HepG2 (cell line): ENCODE measurements at regions of chr2 and their contacts with region 1.

Region 1: DNA sequence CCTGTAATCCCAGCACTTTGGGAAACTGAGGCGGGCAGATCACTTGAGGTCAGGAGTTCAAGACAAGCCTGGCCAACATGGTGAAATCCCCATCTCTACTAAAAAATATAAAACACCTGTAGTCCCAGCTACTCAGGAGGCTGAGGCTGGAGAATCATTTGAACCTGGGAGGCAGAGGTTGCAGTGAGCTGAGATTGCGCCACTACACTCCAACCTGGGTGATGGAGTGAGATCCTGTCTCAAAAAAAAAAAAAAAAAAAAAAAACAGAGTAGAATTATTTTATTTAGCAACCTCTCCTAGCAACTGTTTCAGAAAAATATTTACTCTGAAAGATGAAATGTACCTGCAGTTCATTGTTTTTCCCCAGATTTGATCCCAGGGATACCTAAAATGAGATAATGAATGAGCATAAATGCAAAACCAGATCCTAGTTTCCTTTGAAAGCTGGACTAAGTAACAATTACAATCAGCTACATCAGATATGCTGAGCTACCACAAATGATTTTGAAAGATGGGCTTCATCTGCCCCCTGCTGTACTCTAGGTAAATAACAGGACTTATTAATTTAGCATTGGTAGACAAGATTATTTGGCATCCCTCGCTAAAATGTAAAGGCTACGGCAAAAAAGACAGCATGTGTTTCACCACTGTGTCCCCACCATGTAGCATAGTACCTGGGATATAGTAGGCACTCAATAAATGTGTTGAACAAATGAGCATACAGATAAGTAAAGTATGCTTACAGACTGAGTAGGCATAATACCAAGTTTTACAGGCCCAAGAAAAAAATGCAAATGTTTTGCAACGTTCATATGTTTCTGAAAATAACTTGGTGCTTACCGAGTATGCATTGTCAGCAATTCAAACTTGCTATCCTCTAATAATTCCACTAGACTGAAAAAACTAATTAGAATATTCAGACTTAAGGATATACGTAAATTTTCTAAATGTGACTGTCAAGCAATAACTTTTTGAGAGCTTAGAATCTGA is 102.5 kb downstream of the ATL2 start:
- DNase-seq: peak; percentile 76
- ATAC-seq: peak; percentile 82
- H3K4me3 ChIP-seq: no peak overlapping the region
- H3K27ac ChIP-seq: no peak overlapping the region
- H3K4me1 ChIP-seq: peaks cover 21% of the 10 kb centered on the region
- H3K27me3 ChIP-seq: peaks cover 0 to 4% of the 10 kb centered on the region in 2 experiments; a peak in 3 of 5 replicates
- CTCF ChIP-seq: peak; percentile 81
- EP300 ChIP-seq: no peak
- POLR2A ChIP-seq: no peak
- RAD21 ChIP-seq: peak; percentile 74

Region 2: DNA sequence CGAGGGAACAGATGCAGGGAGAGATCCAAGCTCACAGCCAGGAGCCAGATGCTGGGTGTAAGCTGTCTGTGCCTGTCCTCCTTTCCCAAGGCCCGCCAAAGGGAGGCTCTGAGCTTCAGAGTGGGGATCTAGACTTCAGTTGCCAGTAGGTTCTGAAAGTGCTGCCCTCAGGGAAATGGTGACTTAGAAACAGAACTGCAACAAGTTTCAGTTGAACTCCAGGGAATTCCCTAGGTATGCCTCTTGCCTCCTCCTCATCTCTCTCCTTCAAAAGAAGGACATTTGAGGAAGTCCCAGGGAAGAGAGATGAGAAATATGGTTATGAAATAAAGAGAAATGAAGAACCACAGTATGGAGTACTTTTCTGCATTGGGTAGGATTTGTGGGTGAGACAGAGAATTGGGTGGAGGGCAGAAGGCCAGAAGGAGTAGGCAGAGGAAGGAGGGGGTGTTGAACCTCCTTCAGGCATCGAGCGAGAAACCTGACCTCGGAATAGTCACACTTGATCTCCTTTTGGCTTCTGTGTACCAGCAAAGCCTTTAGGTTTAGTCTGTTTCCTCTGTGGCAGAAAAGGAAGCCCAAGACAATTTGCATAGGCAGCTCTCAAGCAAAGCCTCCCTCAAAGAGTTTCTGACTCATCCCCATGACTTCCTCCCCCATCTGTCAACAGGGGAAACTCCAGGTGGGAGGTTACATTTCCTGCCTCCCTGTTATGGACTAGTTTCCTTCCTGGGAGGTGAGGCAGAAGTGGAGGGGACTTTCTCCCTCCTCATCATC is 884.4 kb before region 1 on chr2:
- CTCF ChIA-PET with region 1: interaction called, 15 read pairs
- POLR2A ChIA-PET with region 1: no interaction called
- in situ Hi-C with region 1: no loop called
- intact Hi-C with region 1: no loop called
- DNase-seq: peak; percentile 56
- ATAC-seq: peak; percentile 80
- H3K4me3 ChIP-seq: no peak overlapping the region
- H3K27ac ChIP-seq: no peak overlapping the region
- H3K4me1 ChIP-seq: peaks cover 12% of the 10 kb centered on the region; the same call in 1 of the 2 replicates
- H3K27me3 ChIP-seq: peaks cover 0 to 2% of the 10 kb centered on the region in 2 experiments; a peak in 2 of 5 replicates
- CTCF ChIP-seq: no peak
- EP300 ChIP-seq: peak in 1 of 2 experiments; percentile 14; a peak in 1 of 4 replicates
- POLR2A ChIP-seq: no peak
- RAD21 ChIP-seq: no peak

Region 3: DNA sequence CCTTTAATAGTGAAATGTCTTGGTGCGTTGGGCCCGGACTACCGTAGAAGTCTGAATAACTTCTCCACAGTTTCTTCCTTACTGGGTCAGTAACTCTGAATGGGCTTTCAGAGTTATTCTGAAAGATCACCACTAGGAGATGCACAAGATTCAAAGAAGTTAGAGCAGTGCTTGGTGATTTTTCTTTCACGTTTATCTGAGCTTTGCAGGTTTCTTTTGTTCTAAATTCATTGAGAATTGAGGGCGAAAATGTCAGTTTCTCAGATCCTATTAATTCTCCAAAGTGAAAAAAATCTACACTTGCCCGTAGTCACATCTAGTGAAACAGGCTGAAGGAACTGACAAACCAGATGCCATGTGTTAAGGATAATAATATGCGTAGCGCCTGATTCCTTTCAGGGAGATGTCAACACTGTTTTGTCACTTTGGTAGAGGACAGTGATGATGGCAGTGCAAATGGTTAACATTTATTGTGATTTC is 860.1 kb before region 1 on chr2:
- CTCF ChIA-PET with region 1: interaction called, 3 read pairs
- POLR2A ChIA-PET with region 1: no interaction called
- in situ Hi-C with region 1: no loop called
- intact Hi-C with region 1: loop called (anchors 2 kb)
- DNase-seq: peak; percentile 39
- ATAC-seq: peak; percentile 87
- H3K4me3 ChIP-seq: no peak overlapping the region
- H3K27ac ChIP-seq: no peak overlapping the region
- H3K4me1 ChIP-seq: no peaks in the 10 kb centered on the region
- H3K27me3 ChIP-seq: peaks cover 0 to 10% of the 10 kb centered on the region in 2 experiments; a peak in 3 of 5 replicates
- CTCF ChIP-seq: peak; percentile 72
- EP300 ChIP-seq: no peak
- POLR2A ChIP-seq: no peak
- RAD21 ChIP-seq: peak; percentile 72

Region 4: DNA sequence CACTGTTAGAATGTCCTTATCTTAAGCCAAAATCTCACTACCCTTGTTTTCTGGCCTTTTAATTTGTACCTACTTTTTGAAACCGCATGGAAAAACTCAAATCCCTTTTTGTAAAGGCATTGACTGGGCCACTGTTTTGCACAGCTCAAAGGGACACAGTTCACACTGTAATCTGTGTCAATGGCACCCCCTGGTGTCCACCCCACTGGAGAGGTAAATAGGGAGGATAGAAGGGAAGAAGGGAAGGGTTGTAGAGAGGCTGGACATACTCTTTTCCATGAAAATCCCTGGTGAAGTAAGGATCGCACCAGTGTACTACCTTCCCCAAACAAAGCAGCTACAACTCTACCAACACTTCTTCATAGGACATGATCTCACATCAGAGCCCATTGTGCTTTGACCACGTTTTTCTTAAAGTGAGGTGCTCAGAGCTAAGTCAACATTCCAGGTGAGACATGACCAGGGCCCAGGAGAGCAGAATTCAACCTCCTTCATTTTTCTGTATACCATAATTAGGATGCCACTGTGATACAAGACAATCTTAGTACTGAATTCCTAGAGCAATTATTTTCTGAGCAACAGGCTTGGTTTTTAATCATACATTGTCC is 441.9 kb before region 1 on chr2:
- CTCF ChIA-PET with region 1: no interaction called
- POLR2A ChIA-PET with region 1: no interaction called
- in situ Hi-C with region 1: no loop called
- intact Hi-C with region 1: loop called (anchors 1 kb)
- DNase-seq: peak; percentile 73
- ATAC-seq: peak; percentile 99
- H3K4me3 ChIP-seq: no peak overlapping the region
- H3K27ac ChIP-seq: no peak overlapping the region
- H3K4me1 ChIP-seq: peaks cover 7% of the 10 kb centered on the region
- H3K27me3 ChIP-seq: peaks cover 0 to 13% of the 10 kb centered on the region in 2 experiments; a peak in 2 of 5 replicates
- CTCF ChIP-seq: peak; percentile 93
- EP300 ChIP-seq: no peak
- POLR2A ChIP-seq: no peak
- RAD21 ChIP-seq: peak; percentile 78

Region 5: DNA sequence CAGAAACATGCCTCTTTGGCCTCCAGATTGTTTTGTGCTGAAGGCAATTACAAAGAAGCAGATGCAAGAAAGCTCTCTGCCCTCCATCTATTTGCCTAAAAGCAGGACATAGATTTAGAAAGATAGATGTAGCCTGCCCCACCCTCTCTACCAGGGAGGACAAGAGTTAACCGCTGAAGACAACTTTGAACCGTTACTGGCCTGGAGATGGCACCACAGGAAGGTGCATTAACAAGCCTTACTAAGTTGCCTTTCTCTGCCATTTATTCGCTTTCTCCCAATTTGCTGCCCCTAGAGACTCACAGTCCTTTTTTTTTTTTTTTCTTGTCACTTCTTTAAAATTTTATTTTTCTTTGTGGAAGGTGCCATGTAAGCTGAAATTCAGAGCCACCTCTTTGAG is 378.3 kb before region 1 on chr2:
- CTCF ChIA-PET with region 1: interaction called, 4 read pairs
- POLR2A ChIA-PET with region 1: no interaction called
- in situ Hi-C with region 1: loop called (anchors 5 kb)
- intact Hi-C with region 1: loop called (anchors 1 kb)
- DNase-seq: peak; percentile 56
- ATAC-seq: peak; percentile 89
- H3K4me3 ChIP-seq: no peak overlapping the region
- H3K27ac ChIP-seq: no peak overlapping the region
- H3K4me1 ChIP-seq: peaks cover 9% of the 10 kb centered on the region; the same call in 1 of the 2 replicates
- H3K27me3 ChIP-seq: no peaks in the 10 kb centered on the region; a peak in 2 of 5 replicates
- CTCF ChIP-seq: peak; percentile 80
- EP300 ChIP-seq: no peak
- POLR2A ChIP-seq: no peak
- RAD21 ChIP-seq: peak; percentile 62; the same call in 1 of the 2 replicates

Region 6: GRCh38 chr2:37982147-37982582 is 292.4 kb before region 1 on chr2:
- CTCF ChIA-PET with region 1: interaction called, 19 read pairs
- POLR2A ChIA-PET with region 1: no interaction called
- in situ Hi-C with region 1: no loop called
- intact Hi-C with region 1: loop called (anchors 1 kb)
- DNase-seq: peak; percentile 60
- ATAC-seq: peak; percentile 67
- H3K4me3 ChIP-seq: no peak overlapping the region
- H3K27ac ChIP-seq: no peak overlapping the region
- H3K4me1 ChIP-seq: no peaks in the 10 kb centered on the region
- H3K27me3 ChIP-seq: no peaks in the 10 kb centered on the region
- CTCF ChIP-seq: peak; percentile 83
- EP300 ChIP-seq: no peak
- POLR2A ChIP-seq: no peak
- RAD21 ChIP-seq: peak; percentile 50; the same call in 1 of the 2 replicates

Region 7: GRCh38 chr2:38115216-38116032 is 159.2 kb before region 1 on chr2:
- CTCF ChIA-PET with region 1: interaction called, 5 read pairs
- POLR2A ChIA-PET with region 1: no interaction called
- in situ Hi-C with region 1: no loop called
- intact Hi-C with region 1: loop called (anchors 1 kb)
- DNase-seq: peak; percentile 75
- ATAC-seq: peak; percentile 97
- H3K4me3 ChIP-seq: no peak overlapping the region
- H3K27ac ChIP-seq: no peak overlapping the region
- H3K4me1 ChIP-seq: no peaks in the 10 kb centered on the region
- H3K27me3 ChIP-seq: peaks cover 0 to 9% of the 10 kb centered on the region in 2 experiments; a peak in 2 of 5 replicates
- CTCF ChIP-seq: peak; percentile 93
- EP300 ChIP-seq: no peak
- POLR2A ChIP-seq: no peak
- RAD21 ChIP-seq: peak; percentile 79

Region 8: DNA sequence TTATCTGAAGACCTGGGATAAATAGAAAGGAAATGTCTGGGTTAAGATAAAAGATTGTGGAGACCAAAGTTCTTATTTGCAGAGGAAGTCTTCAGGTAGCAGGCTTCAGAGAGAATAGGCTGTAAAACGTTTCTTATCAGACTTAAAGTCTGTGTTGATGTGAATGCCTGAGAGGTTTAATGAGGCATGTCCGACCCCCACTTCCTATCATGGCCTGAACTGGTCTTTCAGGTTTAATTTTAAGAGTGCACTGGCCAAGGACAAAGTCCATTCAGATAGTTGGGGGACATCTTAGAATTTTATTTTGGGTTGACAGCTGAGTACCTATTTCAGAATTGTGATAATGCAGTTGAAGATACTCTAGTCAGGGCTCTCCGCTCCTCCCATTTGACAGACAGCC is 10.4 kb after region 1 on chr2:
- CTCF ChIA-PET with region 1: no interaction called
- POLR2A ChIA-PET with region 1: no interaction called
- in situ Hi-C with region 1: no loop called
- intact Hi-C with region 1: no loop called
- DNase-seq: no peak
- ATAC-seq: no peak
- H3K4me3 ChIP-seq: no peak overlapping the region
- H3K27ac ChIP-seq: no peak overlapping the region
- H3K4me1 ChIP-seq: no peaks in the 10 kb centered on the region
- H3K27me3 ChIP-seq: no peaks in the 10 kb centered on the region; a peak in 1 of 5 replicates
- CTCF ChIP-seq: no peak
- EP300 ChIP-seq: no peak
- POLR2A ChIP-seq: no peak
- RAD21 ChIP-seq: no peak

Region 9: GRCh38 chr2:38907743-38908562 is 633.4 kb after region 1 on chr2:
- CTCF ChIA-PET with region 1: no interaction called
- POLR2A ChIA-PET with region 1: no interaction called
- in situ Hi-C with region 1: no loop called
- intact Hi-C with region 1: no loop called
- DNase-seq: peak; percentile 89
- ATAC-seq: peak; percentile 91
- H3K4me3 ChIP-seq: peak overlapping the region in 1 of 3 experiments; percentile 14; a peak in 1 of 6 replicates
- H3K27ac ChIP-seq: peak overlapping the region; percentile 18
- H3K4me1 ChIP-seq: peaks cover 46% of the 10 kb centered on the region
- H3K27me3 ChIP-seq: no peaks in the 10 kb centered on the region
- CTCF ChIP-seq: 0 out of 2 replicates have a peak, but pooled peaks have one; percentile 4
- EP300 ChIP-seq: peak in 1 of 2 experiments; percentile 75; a peak in 3 of 4 replicates
- POLR2A ChIP-seq: no peak
- RAD21 ChIP-seq: no peak